Mammary epithelial cell (primary cell): ENCODE measurements at regions of chr18 and their contacts with region 1.

Region 1: GRCh38 chr18:21612125-21612991 is at the start of gene SNRPD1:
- DNase-seq: peak; percentile 90
- H3K4me3 ChIP-seq: peak within 1 kb of the TSS; percentile 72 to 100 (median 100)
- H3K27ac ChIP-seq: peak within 1 kb of the TSS; percentile 97
- H3K4me1 ChIP-seq: peaks cover 12% of the 10 kb centered on the region
- H3K27me3 ChIP-seq: no peaks in the 10 kb centered on the region
- CTCF ChIP-seq: peak; percentile 87 to 98
- total RNA-seq, gene SNRPD1: 7.5 to 68.6 TPM

Region 2: DNA sequence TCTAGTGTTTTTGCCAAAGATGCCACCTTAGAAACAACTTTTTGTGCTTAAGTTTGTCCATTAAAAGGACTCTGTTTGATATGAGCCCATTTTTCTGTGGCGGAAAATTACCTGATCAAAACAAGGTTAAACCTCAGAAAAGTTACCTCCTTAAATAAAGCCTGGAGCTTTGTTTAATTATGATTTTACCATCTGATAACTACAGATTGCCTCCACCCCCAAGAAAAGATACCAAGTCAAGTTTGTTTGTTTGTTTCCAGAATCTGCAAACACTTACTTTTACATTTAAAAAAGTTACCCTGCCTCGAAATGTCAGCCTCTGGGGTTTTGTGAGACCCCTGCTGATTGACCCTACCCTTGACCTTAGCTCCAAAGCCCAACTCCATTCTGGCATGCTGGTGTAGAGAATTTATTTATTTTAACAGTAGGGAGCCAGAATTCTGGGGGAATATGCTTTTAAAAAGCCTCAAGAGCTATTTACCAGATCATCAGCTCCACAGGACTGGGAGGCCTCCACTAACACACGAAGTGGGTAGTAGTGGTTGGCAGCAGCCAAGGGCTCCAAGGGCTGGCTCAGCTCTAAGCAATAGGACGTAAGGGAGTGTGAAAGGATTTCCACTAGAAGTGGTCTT is 393.6 kb before region 1 on chr18:
- CTCF ChIA-PET with region 1: interaction called, 18 read pairs
- dilution Hi-C with region 1: no loop called
- in situ Hi-C with region 1: no loop called
- intact Hi-C with region 1: no loop called
- DNase-seq: no peak
- H3K4me3 ChIP-seq: no peak overlapping the region
- H3K27ac ChIP-seq: no peak overlapping the region
- H3K4me1 ChIP-seq: no peaks in the 10 kb centered on the region
- H3K27me3 ChIP-seq: no peaks in the 10 kb centered on the region
- CTCF ChIP-seq: no peak

Region 3: DNA sequence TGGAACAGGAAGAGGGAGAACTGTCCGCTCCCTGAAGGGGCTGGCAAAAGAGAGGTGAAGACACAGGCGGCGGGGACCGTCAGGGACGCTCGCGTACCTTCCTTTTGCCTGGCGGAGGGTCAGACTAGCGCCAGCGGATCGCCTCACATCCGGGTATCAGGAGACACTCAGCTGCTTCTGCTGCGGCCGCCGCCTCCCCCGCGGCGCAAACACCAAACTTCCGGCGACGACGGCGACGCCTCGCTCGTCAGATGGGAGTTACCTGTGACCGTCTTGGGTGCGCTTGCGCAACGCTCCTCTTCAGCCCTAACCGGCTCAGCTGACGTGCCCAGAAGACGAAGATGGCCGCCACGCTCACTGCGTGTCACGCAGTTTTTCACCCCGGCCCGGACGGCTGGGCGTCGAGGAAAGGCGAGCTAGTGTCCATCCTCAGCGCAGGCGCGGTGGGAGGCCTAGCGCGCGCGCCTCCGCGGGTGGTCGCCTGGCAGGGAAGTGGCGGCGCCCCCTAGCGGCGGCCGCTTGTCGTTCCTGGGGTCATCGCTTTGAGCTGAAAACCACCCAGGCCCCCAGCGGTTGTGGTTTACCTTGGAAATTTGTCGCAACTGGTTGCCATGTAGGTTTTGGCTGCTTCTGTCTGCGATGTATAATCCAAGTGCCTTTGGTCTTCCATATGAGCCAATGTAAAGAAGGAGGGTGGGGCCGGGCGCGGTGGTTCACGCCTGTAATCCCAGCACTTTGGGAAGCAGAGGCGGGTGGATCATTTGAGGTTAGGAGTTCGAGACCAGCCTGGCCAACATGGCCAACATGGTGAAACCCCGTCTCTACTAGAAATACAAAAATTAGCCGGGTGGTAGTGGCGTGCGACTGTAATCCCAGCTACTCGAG is 11.6 kb before region 1 on chr18 and contains the start of gene ESCO1:
- CTCF ChIA-PET with region 1: no interaction called
- dilution Hi-C with region 1: no loop called
- in situ Hi-C with region 1: no loop called
- intact Hi-C with region 1: loop called (anchors 1 kb)
- DNase-seq: peak; percentile 99
- H3K4me3 ChIP-seq: peak within 1 kb of the TSS; percentile 62 to 99 (median 96)
- H3K27ac ChIP-seq: peak within 1 kb of the TSS; percentile 91
- H3K4me1 ChIP-seq: peaks cover 5% of the 10 kb centered on the region
- H3K27me3 ChIP-seq: no peaks in the 10 kb centered on the region
- CTCF ChIP-seq: peak; percentile 79 to 89
- total RNA-seq, gene ESCO1: 14.9 to 16.2 TPM

Region 4: GRCh38 chr18:21672521-21673267 is 60.3 kb after region 1 on chr18:
- CTCF ChIA-PET with region 1: no interaction called
- dilution Hi-C with region 1: no loop called
- in situ Hi-C with region 1: no loop called
- intact Hi-C with region 1: loop called (anchors 2 kb)
- DNase-seq: peak; percentile 90
- H3K4me3 ChIP-seq: no peak overlapping the region
- H3K27ac ChIP-seq: peak overlapping the region; percentile 77
- H3K4me1 ChIP-seq: peaks cover 44% of the 10 kb centered on the region
- H3K27me3 ChIP-seq: no peaks in the 10 kb centered on the region
- CTCF ChIP-seq: peak in 1 of 2 donors; percentile 8

Region 5: GRCh38 chr18:21740724-21741510 is 128.6 kb after region 1 on chr18 and contains the start of gene MIB1:
- CTCF ChIA-PET with region 1: no interaction called
- dilution Hi-C with region 1: no loop called
- in situ Hi-C with region 1: no loop called
- intact Hi-C with region 1: loop called (anchors 2 kb)
- DNase-seq: peak; percentile 95
- H3K4me3 ChIP-seq: peak within 1 kb of the TSS; percentile 61 to 94 (median 79)
- H3K27ac ChIP-seq: peak within 1 kb of the TSS; percentile 91
- H3K4me1 ChIP-seq: peaks cover 7% of the 10 kb centered on the region
- H3K27me3 ChIP-seq: no peaks in the 10 kb centered on the region
- CTCF ChIP-seq: no peak
- total RNA-seq, gene MIB1: 46.8 to 64.0 TPM

Region 6: GRCh38 chr18:21851327-21851972 is 239.1 kb after region 1 on chr18:
- CTCF ChIA-PET with region 1: no interaction called
- dilution Hi-C with region 1: no loop called
- in situ Hi-C with region 1: no loop called
- intact Hi-C with region 1: loop called (anchors 10 kb)
- DNase-seq: no peak
- H3K4me3 ChIP-seq: no peak overlapping the region
- H3K27ac ChIP-seq: no peak overlapping the region
- H3K4me1 ChIP-seq: no peaks in the 10 kb centered on the region
- H3K27me3 ChIP-seq: no peaks in the 10 kb centered on the region
- CTCF ChIP-seq: peak in 1 of 2 donors; percentile 41

Region 7: DNA sequence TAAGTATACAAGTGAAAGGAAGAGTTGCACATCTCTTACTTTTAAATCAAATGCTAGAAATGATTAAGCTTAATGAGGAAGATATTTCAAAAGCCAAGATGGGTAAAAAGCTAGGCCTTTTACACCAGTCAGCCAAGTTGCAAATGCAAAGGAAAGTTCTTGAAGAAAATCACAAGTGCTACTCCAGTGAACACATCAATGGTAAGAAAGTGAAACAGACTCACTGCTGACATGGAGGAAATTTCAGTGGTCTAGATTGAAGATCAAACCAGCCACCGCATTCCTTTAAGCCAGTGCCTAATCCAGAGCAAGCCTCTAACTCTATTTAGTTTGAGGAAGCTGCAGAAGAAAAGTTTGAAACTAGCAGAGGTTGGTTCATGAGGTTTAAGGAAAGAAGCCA is 1399.9 kb after region 1 on chr18:
- CTCF ChIA-PET with region 1: no interaction called
- dilution Hi-C with region 1: no loop called
- in situ Hi-C with region 1: no loop called
- intact Hi-C with region 1: no loop called
- DNase-seq: no peak
- H3K4me3 ChIP-seq: no peak overlapping the region
- H3K27ac ChIP-seq: no peak overlapping the region
- H3K4me1 ChIP-seq: no peaks in the 10 kb centered on the region
- H3K27me3 ChIP-seq: no peaks in the 10 kb centered on the region
- CTCF ChIP-seq: no peak